GM12878 (cell line): ENCODE measurements at regions of chr7 and their contacts with region 1.

Region 1: DNA sequence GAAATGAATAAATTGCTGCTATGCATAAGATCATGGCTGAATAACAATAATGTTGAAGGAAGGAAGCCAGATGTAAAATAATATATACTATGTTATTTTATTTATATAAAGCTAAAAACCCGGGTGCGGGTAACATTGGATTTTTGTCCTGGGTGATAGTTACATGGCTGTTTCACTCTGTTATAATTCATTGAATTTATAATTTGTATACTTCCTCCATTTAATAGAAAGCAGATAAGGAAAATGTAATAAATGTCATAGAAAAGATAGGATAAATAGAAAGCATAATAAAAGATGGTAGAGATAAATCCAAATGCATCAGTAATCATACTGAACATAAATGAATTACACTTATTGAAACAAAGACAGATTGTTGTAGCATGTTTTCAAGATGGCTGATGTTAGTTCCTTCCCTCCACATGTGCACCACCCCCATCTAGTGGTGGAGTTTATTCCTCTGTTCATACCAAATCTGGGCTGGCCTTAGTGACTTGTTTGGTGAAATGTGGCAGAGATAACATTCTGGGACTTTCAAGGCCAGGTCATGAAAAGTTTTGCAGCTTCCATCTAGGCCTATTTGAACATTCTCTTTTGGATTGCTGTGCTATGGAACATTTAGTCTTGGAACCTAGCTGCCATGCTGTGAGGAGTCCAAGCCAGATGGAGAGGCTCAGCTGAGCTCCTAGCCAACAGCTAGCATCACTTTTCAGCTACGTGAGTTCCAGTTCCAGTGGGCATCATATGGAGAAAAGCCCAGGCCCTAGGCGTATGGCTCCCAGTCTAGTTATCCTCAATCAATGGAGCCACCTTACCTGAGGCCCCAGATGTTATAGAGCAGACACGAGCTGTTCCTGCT is 46.9 kb downstream of the AHCYL2 start:
- DNase-seq: peak; percentile 21
- ATAC-seq: peak; percentile 98
- H3K4me3 ChIP-seq: no peak overlapping the region
- H3K27ac ChIP-seq: no peak overlapping the region
- H3K4me1 ChIP-seq: peaks cover 6% of the 10 kb centered on the region; the same call in 1 of the 2 replicates
- H3K27me3 ChIP-seq: no peaks in the 10 kb centered on the region
- CTCF ChIP-seq: peak; percentile 73 to 83 (median 74)
- EP300 ChIP-seq: no peak
- POLR2A ChIP-seq: no peak
- RAD21 ChIP-seq: peak; percentile 85

Region 2: DNA sequence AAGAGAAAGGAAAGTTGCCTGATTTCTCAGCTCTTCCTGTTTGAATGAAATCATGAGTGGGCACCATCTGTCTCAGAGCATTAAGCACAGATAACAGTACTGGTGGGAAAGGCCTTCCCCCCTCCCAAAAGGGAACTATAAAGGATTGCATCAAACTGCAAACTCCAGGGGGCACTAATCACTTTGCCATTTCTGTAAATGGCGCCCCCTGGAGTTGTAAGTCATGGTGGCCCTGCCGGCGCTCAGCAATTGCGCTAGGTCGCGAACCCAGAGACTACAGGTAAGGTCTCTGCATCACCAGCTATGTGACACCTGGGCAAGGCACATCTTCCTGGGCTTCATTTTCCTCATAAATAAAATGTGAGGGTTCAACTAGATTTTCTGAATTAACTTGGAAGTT is 1251.6 kb before region 1 on chr7:
- CTCF ChIA-PET with region 1: no interaction called
- POLR2A ChIA-PET with region 1: no interaction called
- RAD21 ChIA-PET with region 1: no interaction called
- SMC1A ChIA-PET with region 1: no interaction called
- in situ Hi-C with region 1: no loop called
- intact Hi-C with region 1: no loop called
- DNase-seq: no peak
- ATAC-seq: no peak
- H3K4me3 ChIP-seq: no peak overlapping the region
- H3K27ac ChIP-seq: no peak overlapping the region
- H3K4me1 ChIP-seq: no peaks in the 10 kb centered on the region
- H3K27me3 ChIP-seq: no peaks in the 10 kb centered on the region
- CTCF ChIP-seq: peak; percentile 16 to 47 (median 35); a peak in 5 of 6 replicates
- EP300 ChIP-seq: no peak
- POLR2A ChIP-seq: no peak
- RAD21 ChIP-seq: no peak

Region 3: GRCh38 chr7:129224251-129225205 is 47.2 kb before region 1 on chr7 and contains the start of gene AHCYL2:
- CTCF ChIA-PET with region 1: interaction called, 170 read pairs
- POLR2A ChIA-PET with region 1: no interaction called
- RAD21 ChIA-PET with region 1: interaction called, 42 read pairs
- SMC1A ChIA-PET with region 1: interaction called, 12 read pairs
- in situ Hi-C with region 1: no loop called
- intact Hi-C with region 1: no loop called
- DNase-seq: peak; percentile 89
- ATAC-seq: peak; percentile 97
- H3K4me3 ChIP-seq: peak within 1 kb of the TSS; percentile 72
- H3K27ac ChIP-seq: peak within 1 kb of the TSS; percentile 71
- H3K4me1 ChIP-seq: peaks cover 8% of the 10 kb centered on the region; the same call in 1 of the 2 replicates
- H3K27me3 ChIP-seq: no peaks in the 10 kb centered on the region
- CTCF ChIP-seq: no peak
- EP300 ChIP-seq: no peak
- POLR2A ChIP-seq: peak; percentile 90
- RAD21 ChIP-seq: no peak
- polyA plus RNA-seq, gene AHCYL2: 1.7 to 2.0 TPM

Region 4: DNA sequence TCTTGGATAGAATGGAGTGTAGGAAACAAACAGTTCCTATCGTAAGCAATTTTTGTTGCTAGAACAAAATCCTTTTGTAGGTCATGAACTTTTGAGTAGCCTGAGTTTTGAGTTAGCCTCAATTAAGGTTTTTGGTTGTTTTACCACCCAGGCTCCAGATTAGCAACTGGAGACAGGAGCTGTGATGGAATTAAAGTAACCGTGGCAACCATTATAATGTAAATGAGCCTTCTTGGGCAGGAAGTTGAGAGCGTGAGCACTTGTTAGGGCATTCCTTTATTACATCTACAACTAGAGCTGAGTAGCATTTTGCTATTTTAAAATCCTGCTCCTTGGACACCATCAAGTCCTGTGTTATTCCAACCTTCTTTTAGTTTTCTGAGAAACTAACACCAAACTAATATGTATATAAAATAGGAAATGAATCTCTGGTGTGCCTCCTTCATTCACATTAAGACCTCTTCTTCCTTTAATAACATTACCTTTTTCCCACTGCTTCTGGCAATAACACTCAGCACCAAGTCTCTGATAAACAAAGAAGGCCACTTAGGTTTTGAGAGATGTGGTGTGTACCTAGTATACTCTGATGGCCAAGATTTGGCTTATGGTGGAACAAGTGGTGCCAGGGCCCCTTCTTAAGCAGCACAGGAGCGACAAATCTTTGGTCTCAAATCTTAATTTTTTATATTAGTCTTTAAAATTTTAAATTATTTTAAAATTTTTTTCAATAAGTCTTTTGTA is 12.9 kb before region 1 on chr7:
- CTCF ChIA-PET with region 1: interaction called, 15 read pairs
- POLR2A ChIA-PET with region 1: no interaction called
- RAD21 ChIA-PET with region 1: no interaction called
- SMC1A ChIA-PET with region 1: interaction called, 8 read pairs
- in situ Hi-C with region 1: no loop called
- intact Hi-C with region 1: no loop called
- DNase-seq: no peak
- ATAC-seq: no peak
- H3K4me3 ChIP-seq: no peak overlapping the region
- H3K27ac ChIP-seq: no peak overlapping the region
- H3K4me1 ChIP-seq: peaks cover 3% of the 10 kb centered on the region; the same call in 1 of the 2 replicates
- H3K27me3 ChIP-seq: no peaks in the 10 kb centered on the region
- CTCF ChIP-seq: no peak
- EP300 ChIP-seq: no peak
- POLR2A ChIP-seq: no peak
- RAD21 ChIP-seq: no peak

Region 5: DNA sequence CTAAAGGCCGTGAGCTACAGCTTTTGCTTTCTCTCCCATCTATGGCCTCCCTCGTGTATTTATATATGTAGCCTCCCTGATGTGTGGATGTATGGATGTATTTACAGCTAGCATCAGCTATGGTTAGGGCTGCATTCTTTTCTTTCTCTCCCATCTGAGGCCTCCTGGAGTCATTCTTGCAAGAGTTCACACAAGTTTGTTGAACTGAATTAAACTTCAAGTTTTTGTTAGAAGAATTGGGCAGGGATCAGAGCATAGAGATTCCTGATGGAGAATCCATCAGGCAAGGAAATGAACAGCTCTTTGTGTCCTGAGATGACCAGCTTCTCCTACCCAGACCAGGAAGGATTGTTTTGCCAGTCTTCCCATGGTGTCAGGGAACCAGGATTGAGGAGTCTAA is 13.4 kb after region 1 on chr7:
- CTCF ChIA-PET with region 1: interaction called, 21 read pairs
- POLR2A ChIA-PET with region 1: no interaction called
- RAD21 ChIA-PET with region 1: interaction called, 3 read pairs
- SMC1A ChIA-PET with region 1: interaction called, 4 read pairs
- in situ Hi-C with region 1: no loop called
- intact Hi-C with region 1: no loop called
- DNase-seq: no peak
- ATAC-seq: no peak
- H3K4me3 ChIP-seq: no peak overlapping the region
- H3K27ac ChIP-seq: no peak overlapping the region
- H3K4me1 ChIP-seq: no peaks in the 10 kb centered on the region
- H3K27me3 ChIP-seq: no peaks in the 10 kb centered on the region
- CTCF ChIP-seq: no peak
- EP300 ChIP-seq: no peak
- POLR2A ChIP-seq: no peak
- RAD21 ChIP-seq: no peak